ENCODE measurements at regions of chr19 and their contacts with region 1.

Region 1: DNA sequence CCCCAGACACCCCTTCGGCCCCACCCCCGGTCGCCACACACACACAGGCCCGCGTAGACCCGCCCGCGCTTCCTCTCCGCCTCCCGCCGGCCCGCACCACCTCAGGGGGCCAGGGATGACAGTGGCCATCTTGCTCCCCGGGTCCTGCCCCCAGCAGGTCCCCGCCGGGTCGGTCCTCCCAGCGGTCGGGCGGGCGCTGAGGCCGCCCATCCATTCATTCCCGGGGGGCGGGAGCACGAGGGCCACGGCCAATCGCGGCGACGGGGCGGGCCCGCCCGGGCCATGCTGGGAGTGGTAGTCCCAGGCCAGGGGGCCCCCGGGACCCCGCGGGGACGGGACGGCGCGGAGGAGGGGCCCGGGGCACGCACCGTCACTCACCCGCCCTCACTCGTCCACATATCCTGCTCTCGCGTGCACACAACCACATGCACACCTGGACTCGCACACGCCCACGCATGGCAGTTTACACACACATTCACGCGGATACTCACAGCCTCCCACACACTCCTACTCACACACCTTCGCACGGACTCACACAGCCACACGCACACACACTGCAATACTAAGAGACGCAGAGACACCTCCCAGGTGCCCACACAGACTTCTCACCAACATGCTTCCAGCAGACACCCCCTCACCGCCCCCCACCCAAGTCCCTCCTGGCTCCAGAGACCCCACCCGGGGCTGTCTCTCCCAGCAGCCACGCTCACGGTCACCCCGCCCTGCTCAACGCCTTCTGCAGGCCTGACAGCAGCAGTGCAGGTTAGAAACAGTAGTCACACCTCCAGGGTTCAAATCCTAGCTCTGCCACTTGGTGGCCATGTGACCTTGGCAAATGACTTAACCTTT is at the start of gene DPF1:
- DNase-seq: peak; percentile 92 to 100
- ATAC-seq: peak; percentile 79 to 93
- H3K4me3 ChIP-seq: peak within 1 kb of the TSS; percentile 48
- H3K27ac ChIP-seq: peak within 1 kb of the TSS; percentile 34 to 80
- H3K4me1 ChIP-seq: peaks cover 24% of the 10 kb centered on the region
- CTCF ChIP-seq: peak; percentile 42
- EP300 ChIP-seq: no peak
- POLR2A ChIP-seq: peak; percentile 23; the same call in 1 of the 2 replicates
- RAD21 ChIP-seq: peak; percentile 37 to 48; a peak in 4 of 5 replicates
- polyA plus RNA-seq, gene DPF1: 1.3 and 2.1 TPM in 2 replicates

Region 2: GRCh38 chr19:38213911-38214625 is 10.2 kb before region 1 on chr19:
- CTCF ChIA-PET with region 1: interaction called, 20 read pairs
- POLR2A ChIA-PET with region 1: interaction called, 3 read pairs
- DNase-seq: peak in 1 of 2 experiments; percentile 81
- ATAC-seq: peak; percentile 37 to 46
- H3K4me3 ChIP-seq: no peak overlapping the region
- H3K27ac ChIP-seq: no peak overlapping the region
- H3K4me1 ChIP-seq: peaks cover 24% of the 10 kb centered on the region; the same call in 2 of the 3 replicates
- CTCF ChIP-seq: no peak
- EP300 ChIP-seq: no peak
- POLR2A ChIP-seq: no peak
- RAD21 ChIP-seq: no peak